ENCODE measurements at regions of chr10 and their contacts with region 1.

Region 1: DNA sequence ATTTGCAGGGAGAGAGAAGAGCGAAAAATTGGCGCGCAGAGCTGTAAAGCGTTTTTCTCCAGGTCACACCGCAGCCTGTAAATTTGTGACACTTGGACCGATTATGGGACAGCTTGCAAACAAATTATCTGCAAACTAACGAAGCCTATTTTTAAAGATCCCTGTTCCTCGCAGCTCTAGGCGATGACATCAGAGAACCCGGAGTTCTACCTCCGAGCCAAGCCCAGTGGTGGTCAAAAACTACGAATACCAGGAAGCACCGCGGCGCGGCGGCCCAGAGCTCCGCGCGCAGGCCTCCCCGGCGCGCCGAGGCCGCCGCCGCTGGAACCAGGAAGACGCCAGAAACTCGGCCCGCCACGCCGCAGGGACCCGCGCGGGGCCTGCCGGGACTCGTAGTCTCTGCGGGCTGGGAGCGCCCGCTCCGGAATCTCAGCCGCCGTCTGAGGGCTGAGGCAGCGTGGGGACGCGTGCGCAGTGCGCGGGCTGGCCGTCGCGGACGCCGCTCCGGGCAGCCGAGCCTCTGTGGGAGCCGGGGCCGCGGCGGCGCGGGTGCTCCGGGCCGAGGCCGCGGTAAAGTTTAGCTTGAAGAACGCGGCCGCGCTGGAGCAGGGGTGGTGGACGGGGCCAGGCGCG is at the start of gene PLEKHA1:
- DNase-seq: peak; percentile 90
- H3K4me3 Mint-ChIP-seq: peak within 1 kb of the TSS; percentile 90
- H3K27ac Mint-ChIP-seq: peak within 1 kb of the TSS; percentile 92
- H3K4me1 Mint-ChIP-seq: peaks cover 15% of the 10 kb centered on the region
- H3K27me3 Mint-ChIP-seq: peaks cover 52% of the 10 kb centered on the region
- total RNA-seq, gene PLEKHA1: 4.1 and 5.6 TPM in 2 replicates

Region 2: DNA sequence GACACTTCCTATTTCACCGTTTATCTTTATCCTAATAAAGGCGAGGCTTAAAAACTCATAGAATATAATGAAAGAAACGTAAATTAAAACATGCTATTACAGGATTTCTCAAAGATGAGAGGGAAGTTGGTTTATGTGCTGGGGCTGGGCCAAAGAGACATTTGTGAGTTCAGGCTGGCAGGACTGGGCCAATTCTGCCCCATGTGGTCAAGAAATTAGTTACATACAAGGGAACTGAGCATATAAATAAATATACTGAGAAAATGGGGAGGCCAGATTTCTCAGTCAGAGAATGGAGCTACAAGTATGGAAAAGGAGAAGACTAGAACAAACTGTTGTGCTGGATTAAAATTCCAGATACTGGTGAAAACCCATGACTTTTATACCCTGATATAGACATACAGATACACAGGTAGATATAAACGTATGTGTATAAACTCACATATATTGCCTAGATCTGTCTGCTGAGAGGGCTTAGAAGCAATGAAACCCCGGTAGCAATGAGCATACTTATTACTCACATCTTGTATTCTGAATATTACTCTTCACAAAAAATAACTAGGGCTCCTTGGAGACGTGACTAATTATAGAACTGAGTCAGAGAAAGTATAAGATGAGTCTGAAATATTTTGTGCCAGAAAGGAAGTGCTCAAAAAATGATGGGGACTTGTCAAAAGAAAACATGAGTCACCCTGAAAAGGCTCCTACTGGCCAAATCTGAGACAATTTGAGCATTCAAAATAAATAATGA is 620.5 kb before region 1 on chr10:
- intact Hi-C with region 1: loop called (anchors 1 kb)
- DNase-seq: no peak
- H3K4me3 Mint-ChIP-seq: no peak overlapping the region
- H3K27ac Mint-ChIP-seq: peak overlapping the region; percentile 40
- H3K4me1 Mint-ChIP-seq: peaks cover 17% of the 10 kb centered on the region
- H3K27me3 Mint-ChIP-seq: peaks cover 3% of the 10 kb centered on the region

Region 3: DNA sequence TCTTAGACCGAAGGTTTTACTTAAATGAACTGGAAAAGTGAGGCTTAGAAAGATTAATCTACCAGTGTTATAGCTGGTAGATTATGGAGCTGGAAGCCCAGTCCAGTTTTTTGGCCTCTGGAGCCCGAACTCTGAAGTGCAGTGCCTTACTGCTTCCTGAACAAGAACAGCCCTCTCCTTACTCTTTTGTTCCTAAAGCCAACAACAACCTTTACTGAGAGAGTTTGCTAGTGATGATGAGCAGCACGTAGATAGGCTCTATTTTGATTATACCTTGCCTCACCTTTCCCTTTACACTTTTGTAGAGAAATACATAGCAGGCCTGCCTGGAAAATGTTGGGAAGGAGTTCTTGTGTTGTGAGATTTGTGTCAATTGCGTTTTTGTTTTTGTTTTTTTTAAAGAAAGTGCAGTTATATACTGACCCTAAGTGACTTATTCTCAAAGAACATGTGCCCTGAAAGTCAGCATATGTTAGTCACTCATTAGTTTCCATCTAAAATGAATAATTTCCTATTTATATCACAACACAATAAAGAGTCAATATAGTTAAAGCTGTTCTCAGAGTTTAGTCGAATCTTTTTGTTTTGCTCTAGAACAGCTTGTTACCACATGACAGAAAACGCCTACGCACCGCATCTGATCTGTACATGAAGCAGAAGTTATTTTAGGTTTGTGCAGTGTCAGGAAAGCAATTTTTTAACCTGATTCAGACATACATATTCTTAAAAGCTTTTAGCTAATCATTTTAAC is 33.2 kb after region 1 on chr10:
- intact Hi-C with region 1: loop called (anchors 5 kb)
- DNase-seq: no peak
- H3K4me3 Mint-ChIP-seq: no peak overlapping the region
- H3K27ac Mint-ChIP-seq: no peak overlapping the region
- H3K4me1 Mint-ChIP-seq: peaks cover 14% of the 10 kb centered on the region
- H3K27me3 Mint-ChIP-seq: peaks cover 8% of the 10 kb centered on the region

Region 4: DNA sequence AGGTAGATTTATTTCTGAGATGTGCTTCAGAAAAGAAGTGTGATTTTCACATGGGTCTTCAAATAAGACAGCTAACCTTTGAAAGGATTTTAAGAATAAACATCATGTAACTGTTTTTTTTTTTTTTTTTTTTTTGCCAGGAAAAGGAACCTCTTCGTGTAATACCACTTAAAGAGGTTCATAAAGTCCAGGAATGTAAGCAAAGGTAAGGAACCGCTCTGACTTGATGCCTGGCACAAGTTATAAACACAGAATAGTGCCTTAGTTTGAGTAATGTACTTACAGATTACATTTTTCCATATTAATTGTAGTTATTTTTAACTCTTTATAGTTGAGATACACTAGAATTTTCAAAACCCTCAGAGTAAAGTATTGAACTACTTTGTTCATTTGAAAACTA is 49.7 kb after region 1 on chr10:
- intact Hi-C with region 1: no loop called
- DNase-seq: no peak
- H3K4me3 Mint-ChIP-seq: no peak overlapping the region
- H3K27ac Mint-ChIP-seq: no peak overlapping the region
- H3K4me1 Mint-ChIP-seq: peaks cover 23% of the 10 kb centered on the region
- H3K27me3 Mint-ChIP-seq: no peaks in the 10 kb centered on the region

Region 5: GRCh38 chr10:122435212-122435827 is 61.0 kb after region 1 on chr10:
- intact Hi-C with region 1: loop called (anchors 2 kb)
- DNase-seq: no peak
- H3K4me3 Mint-ChIP-seq: no peak overlapping the region
- H3K27ac Mint-ChIP-seq: no peak overlapping the region
- H3K4me1 Mint-ChIP-seq: no peaks in the 10 kb centered on the region
- H3K27me3 Mint-ChIP-seq: no peaks in the 10 kb centered on the region

Region 6: GRCh38 chr10:122879339-122880273 is 505.3 kb after region 1 on chr10 and contains the start of gene FAM24B:
- intact Hi-C with region 1: loop called (anchors 1 kb)
- DNase-seq: peak; percentile 94
- H3K4me3 Mint-ChIP-seq: peak within 1 kb of the TSS; percentile 97
- H3K27ac Mint-ChIP-seq: peak within 1 kb of the TSS; percentile 93
- H3K4me1 Mint-ChIP-seq: peaks cover 53% of the 10 kb centered on the region
- H3K27me3 Mint-ChIP-seq: no peaks in the 10 kb centered on the region
- total RNA-seq, gene FAM24B: 13.1 and 18.4 TPM in 2 replicates

Measured in activated T-helper 1 cell treated with anti-CD3 and anti-CD28 coated beads, Interleukin-12 subunit alpha, Interleukin-12 subunit beta, Interleukin-2, Interleukin-4 antibody, amounts not matched to agents 30 ng/mL and 10 ng/mL and 1 ng/mL, durations not matched to agents 14 hours and 24 hours and 36 hours (primary cell).